Keratinocyte (primary cell): ENCODE measurements at regions of chr22 and their contacts with region 1.

Region 1: GRCh38 chr22:25827415-25827814 is 85.4 kb downstream of the MYO18B start:
- DNase-seq: no peak
- H3K4me3 ChIP-seq: no peak overlapping the region
- H3K27ac ChIP-seq: no peak overlapping the region
- H3K4me1 ChIP-seq: no peaks in the 10 kb centered on the region
- H3K27me3 ChIP-seq: no peaks in the 10 kb centered on the region
- CTCF ChIP-seq: no peak

Region 2: DNA sequence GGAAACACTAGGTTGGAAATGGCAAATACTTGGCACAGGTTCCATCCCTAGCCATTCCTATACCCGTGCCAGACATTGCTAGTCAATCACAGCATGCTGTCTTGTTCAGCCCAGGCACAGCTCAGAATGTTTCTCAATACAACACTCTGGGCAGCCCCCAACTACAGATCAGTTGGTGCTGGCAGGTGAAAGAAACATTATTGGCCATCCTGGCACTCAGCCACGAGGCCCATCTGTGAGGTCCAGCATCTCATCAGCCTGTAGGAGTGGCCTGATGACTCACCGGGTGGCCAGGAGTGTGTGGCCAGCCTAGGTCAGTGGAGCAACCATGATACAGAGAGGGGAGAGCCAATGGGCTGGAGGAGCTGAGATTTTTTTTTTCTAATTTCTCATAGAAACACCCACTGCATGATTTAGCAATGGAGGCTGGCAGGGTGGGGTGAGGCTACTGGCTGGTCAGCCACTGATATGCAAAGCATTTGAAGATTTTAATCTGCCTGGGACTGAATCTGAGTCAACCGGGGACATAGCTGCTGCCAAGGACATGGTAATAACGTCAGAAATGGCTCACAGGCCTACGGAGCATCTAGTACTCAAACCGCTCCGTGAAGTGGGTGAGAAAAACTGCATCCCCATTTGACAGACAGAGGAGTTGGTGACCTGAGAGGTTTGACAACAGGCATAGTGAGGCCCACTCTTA is 80.0 kb before region 1 on chr22:
- dilution Hi-C with region 1: no loop called
- DNase-seq: no peak
- H3K4me3 ChIP-seq: no peak overlapping the region
- H3K27ac ChIP-seq: no peak overlapping the region
- H3K4me1 ChIP-seq: no peaks in the 10 kb centered on the region
- H3K27me3 ChIP-seq: no peaks in the 10 kb centered on the region
- CTCF ChIP-seq: no peak

Region 3: DNA sequence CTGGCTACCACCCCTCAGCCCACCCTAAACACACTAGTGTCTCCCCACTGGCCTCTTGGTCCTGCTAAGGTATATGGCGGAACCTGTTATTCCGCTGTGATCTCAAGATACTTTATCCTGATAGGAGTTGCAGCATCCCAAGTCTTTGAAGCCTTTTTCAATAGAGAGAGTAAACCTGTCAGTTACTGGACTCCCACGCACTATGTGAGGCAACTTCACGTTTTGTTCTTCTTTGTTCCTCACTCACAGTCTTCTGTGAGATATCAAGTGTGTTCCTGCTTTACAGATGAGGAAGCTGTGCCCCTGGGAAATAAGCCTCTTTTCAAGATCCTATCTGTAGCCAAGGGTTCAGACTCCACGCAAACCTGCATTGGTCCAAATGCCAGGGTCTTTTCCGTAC is 42.4 kb after region 1 on chr22:
- dilution Hi-C with region 1: loop called (anchors 5 kb)
- DNase-seq: no peak
- H3K4me3 ChIP-seq: no peak overlapping the region
- H3K27ac ChIP-seq: no peak overlapping the region
- H3K4me1 ChIP-seq: no peaks in the 10 kb centered on the region
- H3K27me3 ChIP-seq: no peaks in the 10 kb centered on the region
- CTCF ChIP-seq: no peak